Sigmoid colon (tissue), 7 donors: ENCODE measurements at regions of chr1 and their contacts with region 1.

Region 1: GRCh38 chr1:153990468-153991150 is at the start of gene RPS27:
- DNase-seq: peak; percentile 98
- H3K4me3 ChIP-seq: peak within 1 kb of the TSS; percentile 72 to 96 (median 80)
- H3K27ac ChIP-seq: peak within 1 kb of the TSS; percentile 90 to 95 (median 92)
- H3K4me1 ChIP-seq: peaks cover 0 to 45% (median 40%) of the 10 kb centered on the region in 4 donors
- H3K27me3 ChIP-seq: no peaks in the 10 kb centered on the region
- CTCF ChIP-seq: no peak
- EP300 ChIP-seq: peak in 2 of 4 donors; percentile 63 to 75
- POLR2A ChIP-seq: peak; percentile 99 to 100
- total RNA-seq, gene RPS27: 1,466 to 4,347 (median 3,611) TPM

Region 2: DNA sequence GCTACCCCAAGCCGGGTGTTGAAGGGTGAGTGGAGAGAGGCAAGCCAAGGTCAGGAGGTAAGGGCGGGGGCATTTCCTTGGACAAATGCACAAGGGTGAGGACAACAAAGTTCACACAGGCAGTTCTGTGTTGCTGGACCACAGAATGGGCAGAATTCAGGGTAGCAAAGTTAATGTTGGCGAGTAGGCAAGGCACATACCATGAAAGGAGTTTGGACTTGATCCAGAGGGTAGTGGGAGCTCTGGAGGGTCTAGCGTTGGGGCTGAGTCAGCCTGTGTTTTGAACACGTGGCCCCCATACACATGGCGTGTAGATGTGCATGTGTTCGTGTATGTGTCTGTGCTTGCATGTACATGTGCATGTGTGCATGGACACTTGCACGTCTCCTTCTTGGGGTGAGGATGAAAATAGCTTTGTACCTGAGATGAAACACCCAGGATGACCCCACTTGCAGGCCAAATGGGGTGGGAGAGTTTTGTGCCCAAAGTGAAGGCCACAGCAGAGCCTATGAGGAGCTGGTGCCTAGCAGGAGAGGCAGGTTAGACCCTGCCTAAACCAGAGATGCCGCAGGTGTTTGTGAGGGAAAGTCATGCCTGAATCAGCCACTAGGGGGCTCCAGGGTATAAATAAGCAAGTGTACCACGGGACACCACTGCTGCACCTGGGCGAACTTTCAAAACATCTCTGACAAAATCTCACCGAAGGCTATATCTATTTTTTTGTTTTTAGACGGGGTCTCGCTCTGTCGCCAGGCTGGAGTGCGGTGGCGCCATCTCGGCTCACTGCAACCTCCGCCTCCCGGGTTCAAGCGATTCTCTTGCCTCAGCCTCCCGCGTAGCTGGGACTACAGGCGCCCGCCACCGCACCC is 193.6 kb before region 1 on chr1:
- intact Hi-C with region 1: loop called (anchors 1 kb)
- DNase-seq: peak; percentile 90
- H3K4me3 ChIP-seq: no peak overlapping the region
- H3K27ac ChIP-seq: no peak overlapping the region
- H3K4me1 ChIP-seq: peaks cover 0 to 7% (median 0%) of the 10 kb centered on the region in 4 donors
- H3K27me3 ChIP-seq: peaks cover 0 to 3% (median 0%) of the 10 kb centered on the region in 3 donors
- CTCF ChIP-seq: peak in 3 of 4 experiments; percentile 86 to 91 (median 89)
- EP300 ChIP-seq: no peak
- POLR2A ChIP-seq: no peak

Region 3: GRCh38 chr1:153963850-153964526 is 26.6 kb before region 1 on chr1:
- intact Hi-C with region 1: loop called (anchors 1 kb)
- DNase-seq: peak; percentile 82
- H3K4me3 ChIP-seq: peak overlapping the region; percentile 62 to 84 (median 80)
- H3K27ac ChIP-seq: peak overlapping the region; percentile 95 to 98 (median 96)
- H3K4me1 ChIP-seq: peaks cover 0 to 66% (median 53%) of the 10 kb centered on the region in 4 donors
- H3K27me3 ChIP-seq: no peaks in the 10 kb centered on the region
- CTCF ChIP-seq: no peak
- EP300 ChIP-seq: no peak
- POLR2A ChIP-seq: no peak